ENCODE measurements at regions of chr17 and their contacts with region 1.

Region 1: GRCh38 chr17:34637548-34638525 is 58.5 kb downstream of the TMEM132E start:
- DNase-seq: peak; percentile 70 to 87 (median 75)
- ATAC-seq: peak; percentile 77 to 97 (median 92)
- H3K4me3 ChIP-seq: peak overlapping the region; percentile 21 to 57 (median 44)
- H3K27ac ChIP-seq: no peak overlapping the region
- H3K4me1 ChIP-seq: peaks cover 0 to 12% (median 5%) of the 10 kb centered on the region in 12 donors
- H3K27me3 ChIP-seq: peaks cover 0 to 72% (median 21%) of the 10 kb centered on the region in 9 donors
- CTCF ChIP-seq: peak; percentile 68 to 90 (median 78)
- POLR2A ChIP-seq: no peak

Region 2: DNA sequence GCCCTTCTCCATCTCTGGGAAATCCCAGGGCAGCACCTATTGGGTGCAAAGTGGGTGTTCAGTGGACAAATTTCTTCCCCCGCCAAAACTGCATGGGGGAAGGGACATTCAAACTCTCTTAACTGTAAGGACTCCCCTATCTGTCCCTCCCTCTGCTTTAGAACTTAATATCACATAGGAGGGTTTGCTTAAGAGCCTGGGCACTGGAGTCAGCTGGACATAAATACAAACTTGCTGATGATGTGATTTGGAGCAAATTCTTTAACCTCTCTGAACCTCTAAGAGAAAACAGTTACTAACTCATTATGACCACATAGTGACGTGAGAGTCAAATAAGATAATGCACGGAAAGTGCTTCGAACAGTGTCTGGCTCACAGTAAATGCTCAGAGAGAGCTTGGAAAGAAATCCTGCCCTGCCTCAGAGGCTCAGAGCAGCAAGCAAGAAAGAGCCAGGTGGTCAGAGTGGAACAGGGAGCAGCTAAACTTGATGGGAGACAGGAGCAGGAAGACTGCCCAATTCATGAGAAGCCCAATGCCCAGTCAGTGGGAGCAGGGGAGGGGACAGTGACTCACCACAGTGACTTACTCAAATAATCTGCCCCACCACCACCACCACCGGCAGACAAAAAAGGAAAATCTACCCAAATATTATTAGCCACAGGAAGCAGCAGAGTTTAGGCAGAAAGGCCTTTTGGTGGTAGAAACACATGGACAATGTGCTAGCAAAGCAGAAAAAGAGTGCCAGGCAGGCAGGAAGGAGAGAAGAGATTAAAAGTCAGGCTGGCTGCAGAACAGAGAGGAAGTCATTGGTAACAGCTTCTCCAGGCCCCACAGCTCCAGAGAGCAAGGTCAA is 250.9 kb before region 1 on chr17:
- intact Hi-C with region 1: no loop called
- DNase-seq: peak in 1 of 5 donors; percentile 10
- ATAC-seq: peak in 3 of 4 donors; percentile 39 to 68 (median 43)
- H3K4me3 ChIP-seq: no peak overlapping the region
- H3K27ac ChIP-seq: peak overlapping the region in 1 of 12 donors; percentile 42
- H3K4me1 ChIP-seq: peaks cover 0 to 35% (median 0%) of the 10 kb centered on the region in 12 donors
- H3K27me3 ChIP-seq: peaks cover 0 to 10% (median 4%) of the 10 kb centered on the region in 9 donors
- CTCF ChIP-seq: no peak
- POLR2A ChIP-seq: no peak

Region 3: GRCh38 chr17:34556384-34556783 is 81.5 kb before region 1 on chr17:
- intact Hi-C with region 1: loop called in 1 of 10 experiments (anchors 10 kb)
- DNase-seq: no peak
- ATAC-seq: no peak
- H3K4me3 ChIP-seq: no peak overlapping the region
- H3K27ac ChIP-seq: no peak overlapping the region
- H3K4me1 ChIP-seq: no peaks in the 10 kb centered on the region
- H3K27me3 ChIP-seq: peaks cover 0 to 50% (median 10%) of the 10 kb centered on the region in 9 donors
- CTCF ChIP-seq: no peak
- POLR2A ChIP-seq: no peak

Region 4: DNA sequence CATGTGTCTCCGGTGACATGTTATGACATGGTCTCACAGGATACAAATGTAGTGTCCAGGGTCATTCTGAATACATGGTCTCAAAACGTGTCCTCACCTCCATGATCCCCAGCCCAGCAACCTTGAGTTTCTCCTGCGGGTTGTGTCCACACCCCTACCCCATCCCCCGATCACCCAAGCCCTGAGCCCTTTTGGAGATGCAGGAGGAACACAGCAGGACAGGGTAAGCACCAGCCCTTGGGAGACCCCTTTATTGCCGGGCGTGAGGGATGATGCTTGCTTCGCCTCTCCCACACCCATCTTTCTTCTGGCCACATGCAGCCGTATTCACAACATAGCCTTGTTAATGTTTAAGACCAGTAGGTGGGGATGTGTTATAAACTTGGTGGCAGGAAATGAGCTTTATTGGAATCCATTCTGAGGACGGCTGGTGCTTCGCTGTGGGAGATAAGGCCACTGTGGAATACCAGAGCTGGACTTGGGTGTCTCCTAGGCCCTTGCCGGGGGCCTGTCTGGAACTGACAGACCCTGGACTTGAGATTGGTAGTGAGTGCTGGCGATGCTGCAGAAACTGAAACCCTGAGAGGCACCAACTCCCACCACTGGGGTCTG is 52.9 kb before region 1 on chr17:
- intact Hi-C with region 1: loop called in 1 of 10 experiments (anchors 5 kb)
- DNase-seq: no peak
- ATAC-seq: peak in 2 of 4 donors; percentile 16 to 17
- H3K4me3 ChIP-seq: no peak overlapping the region
- H3K27ac ChIP-seq: no peak overlapping the region
- H3K4me1 ChIP-seq: peaks cover 6 to 24% (median 19%) of the 10 kb centered on the region in 12 donors
- H3K27me3 ChIP-seq: peaks cover 27 to 93% (median 69%) of the 10 kb centered on the region in 9 donors
- CTCF ChIP-seq: peak in 4 of 12 donors; percentile 9 to 34 (median 14)
- POLR2A ChIP-seq: no peak

Region 5: GRCh38 chr17:34892461-34893249 is 254.8 kb after region 1 on chr17:
- intact Hi-C with region 1: loop called in 1 of 10 experiments (anchors 10 kb)
- DNase-seq: no peak
- ATAC-seq: peak in 3 of 4 donors; percentile 55 to 64 (median 61)
- H3K4me3 ChIP-seq: no peak overlapping the region
- H3K27ac ChIP-seq: no peak overlapping the region
- H3K4me1 ChIP-seq: no peaks in the 10 kb centered on the region
- H3K27me3 ChIP-seq: peaks cover 0 to 74% (median 16%) of the 10 kb centered on the region in 9 donors
- CTCF ChIP-seq: peak in 11 of 12 donors; percentile 11 to 57 (median 41)
- POLR2A ChIP-seq: no peak